Activated naive CD4-positive, alpha-beta T cell treated with anti-CD3 and anti-CD28 coated beads, Interleukin-2, amount 10 ng/mL, durations not matched to agents 7 days and 5 days (primary cell): ENCODE measurements at regions of chr10 and their contacts with region 1.

Region 1: DNA sequence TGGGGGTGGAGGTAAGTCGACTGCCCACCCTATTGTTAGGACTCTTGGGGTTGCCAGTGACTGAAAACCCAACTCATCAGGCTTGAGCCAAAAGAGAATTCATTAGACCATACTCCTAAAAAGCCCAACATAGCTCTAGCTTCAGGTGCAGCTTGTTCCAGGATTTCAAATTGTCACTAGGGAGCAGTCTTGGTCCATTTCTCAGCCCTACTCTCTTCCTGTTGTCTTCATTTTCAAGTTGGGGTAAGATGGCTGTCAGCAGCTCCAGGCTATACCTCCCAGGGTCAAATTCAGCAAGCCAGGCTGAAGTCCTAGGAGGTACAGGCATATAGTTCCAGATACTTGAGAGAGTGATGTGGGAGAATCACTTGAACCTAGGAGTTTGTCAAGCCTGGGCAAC is 14.9 kb upstream of the COL13A1 start:
- DNase-seq: no peak
- H3K4me3 Mint-ChIP-seq: no peak overlapping the region
- H3K27ac Mint-ChIP-seq: no peak overlapping the region
- H3K4me1 Mint-ChIP-seq: no peaks in the 10 kb centered on the region
- H3K27me3 Mint-ChIP-seq: peaks cover 30% of the 10 kb centered on the region

Region 2: GRCh38 chr10:69800109-69800508 is 13.3 kb after region 1 on chr10:
- CTCF ChIA-PET with region 1: interaction called, 29 read pairs
- DNase-seq: no peak
- H3K4me3 Mint-ChIP-seq: no peak overlapping the region
- H3K27ac Mint-ChIP-seq: no peak overlapping the region
- H3K4me1 Mint-ChIP-seq: peaks cover 14% of the 10 kb centered on the region
- H3K27me3 Mint-ChIP-seq: peaks cover 83% of the 10 kb centered on the region

Region 3: DNA sequence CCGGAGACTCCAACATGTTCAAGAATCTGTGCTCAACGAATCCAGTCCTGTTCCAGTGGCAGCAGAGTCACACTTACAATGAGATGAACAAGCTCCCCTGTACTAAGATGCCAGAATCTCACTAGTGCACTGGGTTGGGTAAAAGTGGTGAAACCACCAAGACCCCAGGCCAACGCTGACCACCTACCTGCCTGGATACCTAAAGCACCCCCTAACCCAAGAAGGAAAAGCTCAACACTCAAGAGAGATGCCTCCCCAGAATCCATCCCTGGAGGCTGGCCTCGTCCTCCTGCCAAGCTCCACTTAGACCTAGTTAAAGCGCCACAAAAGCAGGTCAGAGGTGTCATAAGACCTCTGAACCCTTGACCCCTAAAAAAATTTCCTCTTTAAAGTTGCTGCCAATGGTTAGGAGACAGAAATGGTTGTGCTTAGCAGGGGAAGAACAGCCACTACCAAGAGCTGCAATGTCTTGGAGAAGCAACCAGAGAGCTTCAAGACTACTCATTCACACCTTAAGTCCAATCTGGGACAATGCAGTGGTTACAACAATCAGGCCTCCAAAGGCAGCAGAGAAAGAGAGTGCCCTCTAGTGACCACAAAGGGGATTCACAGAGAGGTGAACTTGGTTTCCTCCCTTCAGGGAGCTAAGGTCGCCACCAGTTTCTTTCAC is 171.2 kb after region 1 on chr10:
- CTCF ChIA-PET with region 1: interaction called, 17 read pairs
- DNase-seq: peak; percentile 43
- H3K4me3 Mint-ChIP-seq: no peak overlapping the region
- H3K27ac Mint-ChIP-seq: no peak overlapping the region
- H3K4me1 Mint-ChIP-seq: no peaks in the 10 kb centered on the region
- H3K27me3 Mint-ChIP-seq: peaks cover 37% of the 10 kb centered on the region